Left lung (tissue), 14 donors: ENCODE measurements at regions of chr11 and their contacts with region 1.

Region 1: DNA sequence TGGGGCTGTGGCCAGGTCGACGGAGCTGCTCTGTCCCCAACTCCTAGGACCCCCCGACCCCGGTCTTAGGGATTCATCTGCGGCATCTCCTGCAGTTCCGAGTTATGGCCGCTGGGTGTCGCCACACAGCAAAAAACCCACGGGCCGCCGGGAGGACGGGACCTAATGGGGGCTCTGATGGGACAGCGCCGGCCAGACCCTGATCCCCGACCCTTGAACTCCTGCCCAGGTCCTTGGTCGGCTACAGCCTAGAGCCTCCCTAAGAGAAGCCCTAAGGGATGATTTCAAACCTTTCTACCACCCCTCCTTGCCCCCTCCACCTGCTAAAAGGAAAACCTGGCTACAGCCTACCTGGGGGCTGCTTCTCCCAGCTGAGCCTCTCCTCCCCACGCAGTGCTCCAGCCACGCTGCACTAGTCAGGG is 30.8 kb upstream of the LRRC10B start:
- DNase-seq: peak in 2 of 4 donors; percentile 51 to 88
- ATAC-seq: peak; percentile 55
- H3K4me3 ChIP-seq: no peak overlapping the region
- H3K27ac ChIP-seq: no peak overlapping the region
- H3K4me1 ChIP-seq: peaks cover 5 to 7% of the 10 kb centered on the region in 2 donors
- H3K27me3 ChIP-seq: peaks cover 0 to 18% of the 10 kb centered on the region in 2 donors
- CTCF ChIP-seq: peak; percentile 90 to 92

Region 2: DNA sequence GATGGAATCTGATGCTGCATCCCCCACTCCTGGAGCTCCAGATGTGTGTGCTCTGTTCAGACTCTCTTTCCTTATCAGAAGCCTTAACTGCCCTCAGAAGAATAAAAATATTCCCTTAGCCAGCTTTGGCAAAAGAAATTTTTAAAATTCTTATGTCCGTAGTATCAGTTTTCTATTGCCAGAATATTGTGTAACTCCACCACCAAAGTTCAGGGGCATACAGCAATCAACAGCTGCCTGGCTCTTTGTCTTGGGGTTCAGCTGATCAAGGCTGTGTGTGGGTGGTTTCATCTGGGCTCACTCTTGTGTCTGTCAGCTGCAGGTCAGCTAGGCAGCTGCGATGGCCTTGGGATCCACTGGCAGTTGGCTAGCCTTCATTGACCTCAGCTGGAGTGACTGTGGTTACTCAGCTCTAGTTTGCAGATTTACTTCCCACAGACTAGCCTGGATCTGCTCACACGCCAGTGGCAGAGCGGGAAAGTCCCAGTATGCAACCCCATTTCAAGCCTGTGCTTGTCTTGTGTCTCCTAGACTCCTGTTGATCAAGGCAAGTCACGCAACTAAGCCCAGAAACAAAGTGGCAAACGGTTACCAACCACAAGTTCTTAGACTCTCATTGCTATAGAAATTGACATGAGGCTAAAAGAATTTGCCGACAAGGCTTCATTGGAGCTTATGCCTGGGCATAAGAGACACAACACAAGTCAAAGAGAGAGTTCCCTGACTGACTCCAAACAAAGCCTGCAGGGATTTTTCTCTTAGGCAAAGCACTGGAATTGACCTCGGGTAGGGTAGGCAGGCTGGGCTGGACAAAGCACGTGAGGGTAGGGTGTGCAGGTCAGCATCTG is 108.1 kb before region 1 on chr11:
- intact Hi-C with region 1: no loop called
- DNase-seq: peak in 2 of 4 donors; percentile 37 to 60
- ATAC-seq: peak; percentile 86
- H3K4me3 ChIP-seq: no peak overlapping the region
- H3K27ac ChIP-seq: no peak overlapping the region
- H3K4me1 ChIP-seq: peaks cover 0 to 7% of the 10 kb centered on the region in 2 donors
- H3K27me3 ChIP-seq: no peaks in the 10 kb centered on the region
- CTCF ChIP-seq: no peak

Region 3: GRCh38 chr11:61413496-61413895 is 64.2 kb before region 1 on chr11:
- intact Hi-C with region 1: no loop called
- DNase-seq: no peak
- ATAC-seq: no peak
- H3K4me3 ChIP-seq: no peak overlapping the region
- H3K27ac ChIP-seq: no peak overlapping the region
- H3K4me1 ChIP-seq: peaks cover 0 to 16% of the 10 kb centered on the region in 2 donors
- H3K27me3 ChIP-seq: no peaks in the 10 kb centered on the region
- CTCF ChIP-seq: no peak

Region 4: GRCh38 chr11:61516675-61517572 is 39.2 kb after region 1 on chr11:
- intact Hi-C with region 1: loop called in 1 of 2 experiments (anchors 5 kb)
- DNase-seq: no peak
- ATAC-seq: peak; percentile 70
- H3K4me3 ChIP-seq: no peak overlapping the region
- H3K27ac ChIP-seq: no peak overlapping the region
- H3K4me1 ChIP-seq: peaks cover 2 to 4% of the 10 kb centered on the region in 2 donors
- H3K27me3 ChIP-seq: peaks cover 0 to 21% of the 10 kb centered on the region in 2 donors
- CTCF ChIP-seq: peak; percentile 89 to 96

Region 5: GRCh38 chr11:61627567-61628445 is 150.1 kb after region 1 on chr11:
- intact Hi-C with region 1: loop called in 1 of 2 experiments (anchors 10 kb)
- DNase-seq: peak in 3 of 4 donors; percentile 39 to 67 (median 65)
- ATAC-seq: peak; percentile 88
- H3K4me3 ChIP-seq: no peak overlapping the region
- H3K27ac ChIP-seq: no peak overlapping the region
- H3K4me1 ChIP-seq: no peaks in the 10 kb centered on the region
- H3K27me3 ChIP-seq: peaks cover 0 to 4% of the 10 kb centered on the region in 2 donors
- CTCF ChIP-seq: peak; percentile 70 to 75